Naive thymus-derived CD4-positive, alpha-beta T cell (primary cell): ENCODE measurements at regions of chr10 and their contacts with region 1.

Region 1: GRCh38 chr10:123008439-123009205 is at the starts of genes ACADSB and IKZF5:
- DNase-seq: peak; percentile 83 to 98 (median 96)
- ATAC-seq: peak; percentile 97
- H3K4me3 ChIP-seq: peak within 1 kb of the TSS; percentile 93
- H3K4me3 Mint-ChIP-seq: peak within 1 kb of the TSS; percentile 91 to 100 (median 100)
- H3K27ac ChIP-seq: peak within 1 kb of the TSS; percentile 92
- H3K27ac Mint-ChIP-seq: peak within 1 kb of the TSS; percentile 99 to 100 (median 100)
- H3K4me1 ChIP-seq: peaks cover 28 to 29% of the 10 kb centered on the region in 2 donors
- H3K4me1 Mint-ChIP-seq: peaks cover 28 to 77% (median 70%) of the 10 kb centered on the region in 7 donors
- H3K27me3 ChIP-seq: no peaks in the 10 kb centered on the region
- H3K27me3 Mint-ChIP-seq: no peaks in the 10 kb centered on the region
- total RNA-seq, gene ACADSB: 23.7 to 47.0 (median 27.3) TPM
- total RNA-seq, gene IKZF5: 15.8 to 57.7 (median 37.2) TPM

Region 2: GRCh38 chr10:121927841-121928527 is 1080.6 kb before region 1 on chr10 and contains the start of gene ATE1:
- CTCF ChIA-PET with region 1: interaction called, 3 read pairs
- POLR2A ChIA-PET with region 1: no interaction called
- intact Hi-C with region 1: loop called (anchors 1 to 5 kb)
- DNase-seq: peak; percentile 74 to 86 (median 80)
- ATAC-seq: peak; percentile 98
- H3K4me3 ChIP-seq: peak within 1 kb of the TSS; percentile 65
- H3K4me3 Mint-ChIP-seq: peak within 1 kb of the TSS; percentile 88 to 96 (median 92)
- H3K27ac ChIP-seq: peak within 1 kb of the TSS; percentile 96
- H3K27ac Mint-ChIP-seq: peak within 1 kb of the TSS; percentile 79 to 98 (median 94)
- H3K4me1 ChIP-seq: peaks cover 0 to 13% of the 10 kb centered on the region in 2 donors
- H3K4me1 Mint-ChIP-seq: peaks cover 15 to 48% (median 39%) of the 10 kb centered on the region in 7 donors
- H3K27me3 ChIP-seq: no peaks in the 10 kb centered on the region
- H3K27me3 Mint-ChIP-seq: no peaks in the 10 kb centered on the region
- total RNA-seq, gene ATE1: 23.0 to 26.6 (median 26.2) TPM

Region 3: DNA sequence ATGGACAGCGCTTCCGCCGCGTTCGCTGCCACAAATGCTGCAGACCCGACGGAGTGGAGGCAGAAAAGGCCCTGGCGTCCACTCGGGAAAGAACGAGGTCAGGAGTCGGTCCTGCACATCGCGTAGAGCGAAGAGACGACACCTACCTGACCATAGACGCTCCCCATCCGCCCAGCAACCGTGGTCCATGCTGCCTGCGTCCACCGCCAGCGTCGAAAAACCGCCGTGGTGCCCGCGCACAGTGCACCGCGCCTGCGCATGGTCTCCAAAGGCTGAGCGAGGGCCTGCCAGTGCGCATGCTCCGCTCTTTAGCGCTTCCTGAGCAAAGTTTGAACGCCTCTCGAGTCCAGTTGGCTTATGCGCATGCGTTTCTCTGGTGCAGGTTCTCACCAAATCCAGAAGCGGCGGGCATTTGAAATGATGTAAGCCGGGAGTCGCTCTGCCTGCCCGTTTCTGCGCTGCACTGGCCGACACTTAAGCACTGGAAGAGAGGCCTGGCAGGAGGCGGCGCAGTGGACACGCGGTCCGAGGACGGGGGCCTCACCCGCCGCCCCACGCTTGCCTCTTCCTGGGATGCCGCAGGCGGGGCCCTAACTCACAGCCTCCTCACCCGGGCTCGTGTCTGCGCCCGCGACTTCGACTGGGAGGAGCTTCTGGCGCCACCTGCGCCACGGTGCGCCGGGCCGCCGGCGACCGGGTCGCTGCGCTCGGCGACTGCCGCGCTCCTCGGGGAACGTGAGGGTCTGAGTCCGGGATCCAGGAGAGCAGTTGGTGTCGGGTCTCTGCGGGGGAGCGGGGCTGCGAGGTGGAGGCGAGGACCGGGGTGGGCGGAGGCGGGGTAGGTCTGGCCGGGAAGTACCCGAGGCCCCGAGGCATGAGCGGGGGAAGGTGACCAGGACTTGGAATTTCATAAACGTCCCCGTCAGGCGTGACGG is 129.0 kb before region 1 on chr10 and contains the start of gene FAM24B:
- CTCF ChIA-PET with region 1: no interaction called
- POLR2A ChIA-PET with region 1: interaction called, 4 read pairs
- intact Hi-C with region 1: loop called (anchors 1 kb)
- DNase-seq: peak; percentile 84 to 96 (median 94)
- ATAC-seq: peak; percentile 93
- H3K4me3 ChIP-seq: peak within 1 kb of the TSS; percentile 81
- H3K4me3 Mint-ChIP-seq: peak within 1 kb of the TSS; percentile 86 to 99 (median 92)
- H3K27ac ChIP-seq: peak within 1 kb of the TSS; percentile 77
- H3K27ac Mint-ChIP-seq: peak within 1 kb of the TSS; percentile 85 to 96 (median 92)
- H3K4me1 ChIP-seq: peaks cover 18 to 21% of the 10 kb centered on the region in 2 donors
- H3K4me1 Mint-ChIP-seq: peaks cover 31 to 65% (median 54%) of the 10 kb centered on the region in 7 donors
- H3K27me3 ChIP-seq: no peaks in the 10 kb centered on the region
- H3K27me3 Mint-ChIP-seq: no peaks in the 10 kb centered on the region
- total RNA-seq, gene FAM24B: 9.9 to 13.5 (median 11.4) TPM

Region 4: DNA sequence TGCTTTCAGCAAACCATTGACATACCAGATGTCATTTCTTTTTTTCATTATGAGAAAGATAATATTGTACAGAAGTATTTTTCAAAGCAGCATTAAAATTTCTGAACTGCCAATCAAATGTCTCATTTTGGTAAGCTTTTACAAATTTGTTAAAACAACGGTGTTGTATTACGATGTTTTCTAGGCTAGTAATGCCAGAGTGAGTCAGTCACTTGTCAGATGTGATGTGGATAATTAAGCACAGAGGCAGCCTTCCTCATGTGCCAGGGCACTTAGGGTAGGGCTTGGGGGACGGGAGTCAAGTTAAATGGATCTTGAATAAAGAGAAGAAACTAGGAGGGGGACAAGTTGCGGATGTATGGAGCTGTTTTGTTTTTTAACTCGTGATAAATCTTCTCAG is 18.3 kb before region 1 on chr10:
- CTCF ChIA-PET with region 1: interaction called, 3 read pairs
- POLR2A ChIA-PET with region 1: interaction called, 3 read pairs
- intact Hi-C with region 1: loop called in 1 of 2 experiments (anchors 1 kb)
- DNase-seq: no peak
- ATAC-seq: no peak
- H3K4me3 ChIP-seq: no peak overlapping the region
- H3K4me3 Mint-ChIP-seq: no peak overlapping the region
- H3K27ac ChIP-seq: no peak overlapping the region
- H3K27ac Mint-ChIP-seq: peak overlapping the region in 4 of 9 donors; percentile 3 to 76 (median 28)
- H3K4me1 ChIP-seq: no peaks in the 10 kb centered on the region
- H3K4me1 Mint-ChIP-seq: peaks cover 0 to 3% (median 0%) of the 10 kb centered on the region in 7 donors
- H3K27me3 ChIP-seq: no peaks in the 10 kb centered on the region
- H3K27me3 Mint-ChIP-seq: no peaks in the 10 kb centered on the region

Region 5: DNA sequence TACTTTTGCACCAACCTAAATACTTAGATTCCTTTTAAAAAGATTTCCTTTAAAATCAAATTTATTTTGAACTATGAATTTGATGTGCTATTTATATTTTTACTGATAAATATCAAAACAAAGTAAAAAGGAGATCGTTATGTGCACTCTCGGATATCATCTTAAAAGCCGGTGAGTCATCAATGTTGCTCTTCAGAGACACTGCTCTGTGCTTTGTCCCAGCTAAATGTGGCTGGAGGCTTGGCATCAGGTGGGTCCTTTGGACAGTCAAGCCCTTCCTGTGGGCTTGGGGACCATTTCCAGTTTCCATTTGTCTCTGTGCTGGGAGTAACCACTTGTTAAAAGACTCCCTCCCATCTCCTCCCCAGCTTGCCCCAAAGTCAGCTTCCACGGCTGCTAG is 339.2 kb after region 1 on chr10:
- CTCF ChIA-PET with region 1: no interaction called
- POLR2A ChIA-PET with region 1: no interaction called
- intact Hi-C with region 1: no loop called
- DNase-seq: no peak
- ATAC-seq: no peak
- H3K4me3 ChIP-seq: no peak overlapping the region
- H3K4me3 Mint-ChIP-seq: no peak overlapping the region
- H3K27ac ChIP-seq: no peak overlapping the region
- H3K27ac Mint-ChIP-seq: no peak overlapping the region
- H3K4me1 ChIP-seq: no peaks in the 10 kb centered on the region
- H3K4me1 Mint-ChIP-seq: no peaks in the 10 kb centered on the region
- H3K27me3 ChIP-seq: no peaks in the 10 kb centered on the region
- H3K27me3 Mint-ChIP-seq: peaks cover 0 to 2% (median 0%) of the 10 kb centered on the region in 5 donors

Region 6: GRCh38 chr10:124388823-124389612 is 1380.4 kb after region 1 on chr10:
- CTCF ChIA-PET with region 1: no interaction called
- POLR2A ChIA-PET with region 1: no interaction called
- intact Hi-C with region 1: loop called in 1 of 2 experiments (anchors 1 kb)
- DNase-seq: peak; percentile 80 to 98 (median 91)
- ATAC-seq: peak; percentile 99
- H3K4me3 ChIP-seq: peak overlapping the region; percentile 68
- H3K4me3 Mint-ChIP-seq: peak overlapping the region in 7 of 10 donors; percentile 25 to 71 (median 59)
- H3K27ac ChIP-seq: peak overlapping the region; percentile 62
- H3K27ac Mint-ChIP-seq: peak overlapping the region in 1 of 9 donors; percentile 49
- H3K4me1 ChIP-seq: peaks cover 4 to 5% of the 10 kb centered on the region in 2 donors
- H3K4me1 Mint-ChIP-seq: peaks cover 0 to 2% (median 0%) of the 10 kb centered on the region in 7 donors
- H3K27me3 ChIP-seq: no peaks in the 10 kb centered on the region
- H3K27me3 Mint-ChIP-seq: peaks cover 0 to 7% (median 5%) of the 10 kb centered on the region in 5 donors

Region 7: GRCh38 chr10:124802313-124802675 is 1793.7 kb after region 1 on chr10:
- CTCF ChIA-PET with region 1: no interaction called
- POLR2A ChIA-PET with region 1: no interaction called
- intact Hi-C with region 1: loop called in 1 of 2 experiments (anchors 5 kb)
- DNase-seq: peak in 1 of 9 donors; percentile 16
- ATAC-seq: peak; percentile 28
- H3K4me3 ChIP-seq: peak overlapping the region; percentile 97
- H3K4me3 Mint-ChIP-seq: peak overlapping the region; percentile 85 to 96 (median 88)
- H3K27ac ChIP-seq: peak overlapping the region; percentile 90
- H3K27ac Mint-ChIP-seq: peak overlapping the region; percentile 55 to 95 (median 88)
- H3K4me1 ChIP-seq: peaks cover 0 to 5% of the 10 kb centered on the region in 2 donors
- H3K4me1 Mint-ChIP-seq: peaks cover 9 to 24% (median 17%) of the 10 kb centered on the region in 7 donors
- H3K27me3 ChIP-seq: no peaks in the 10 kb centered on the region
- H3K27me3 Mint-ChIP-seq: peaks cover 0 to 12% (median 4%) of the 10 kb centered on the region in 5 donors